Activated CD4-positive, alpha-beta T cell treated with anti-CD3 and anti-CD28 coated beads for 36 hours (primary cell): ENCODE measurements at regions of chr4 and their contacts with region 1.

Region 1: DNA sequence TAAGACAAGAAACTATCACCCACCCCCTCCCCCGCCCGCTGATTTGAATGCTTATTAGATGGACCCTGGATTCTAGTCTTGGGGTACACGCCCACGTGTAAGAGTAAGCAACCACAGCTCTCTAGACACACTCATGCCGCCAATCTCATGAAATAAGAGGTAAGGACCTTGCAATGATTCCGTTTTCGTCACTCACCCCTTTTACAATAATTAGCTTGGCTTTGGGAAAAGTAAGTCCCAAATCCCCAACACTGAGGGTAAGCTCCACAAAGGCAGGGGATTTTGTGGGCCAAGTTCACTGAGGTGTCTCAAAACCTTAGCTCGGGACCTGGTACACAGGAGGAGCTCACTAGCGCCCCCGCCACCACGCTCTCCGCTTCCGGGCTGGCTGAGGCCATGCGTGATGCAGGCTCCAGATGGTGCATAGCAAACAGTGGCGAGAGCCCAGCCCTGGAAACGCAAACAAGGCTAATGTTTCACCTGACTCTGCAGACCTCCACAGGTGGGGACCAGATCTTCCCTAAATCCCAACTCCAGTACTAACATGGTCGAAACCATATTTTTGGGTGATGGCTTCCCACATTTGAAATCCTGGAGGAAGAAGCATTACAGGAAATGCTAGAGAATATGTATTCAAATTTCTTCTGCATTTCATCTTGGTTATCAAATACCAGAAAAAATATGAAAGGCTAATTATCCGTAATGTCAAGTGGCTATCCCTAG is 4.1 kb downstream of the PLAC8 start:
- DNase-seq: peak; percentile 96
- ATAC-seq: peak; percentile 81
- H3K4me3 Mint-ChIP-seq: peak overlapping the region; percentile 91
- H3K27ac Mint-ChIP-seq: peak overlapping the region; percentile 96
- H3K4me1 Mint-ChIP-seq: peaks cover 49% of the 10 kb centered on the region
- H3K27me3 Mint-ChIP-seq: no peaks in the 10 kb centered on the region

Region 2: GRCh38 chr4:82373816-82374625 is 736.4 kb before region 1 on chr4 and contains the start of gene HNRNPD:
- CTCF ChIA-PET with region 1: no interaction called
- POLR2A ChIA-PET with region 1: no interaction called
- intact Hi-C with region 1: loop called in 1 of 2 experiments (anchors 2 kb)
- DNase-seq: peak; percentile 97
- ATAC-seq: peak; percentile 90
- H3K4me3 Mint-ChIP-seq: peak within 1 kb of the TSS; percentile 89
- H3K27ac Mint-ChIP-seq: peak within 1 kb of the TSS; percentile 99
- H3K4me1 Mint-ChIP-seq: peaks cover 34% of the 10 kb centered on the region
- H3K27me3 Mint-ChIP-seq: no peaks in the 10 kb centered on the region
- total RNA-seq, gene HNRNPD: 505 to 510 TPM

Region 3: DNA sequence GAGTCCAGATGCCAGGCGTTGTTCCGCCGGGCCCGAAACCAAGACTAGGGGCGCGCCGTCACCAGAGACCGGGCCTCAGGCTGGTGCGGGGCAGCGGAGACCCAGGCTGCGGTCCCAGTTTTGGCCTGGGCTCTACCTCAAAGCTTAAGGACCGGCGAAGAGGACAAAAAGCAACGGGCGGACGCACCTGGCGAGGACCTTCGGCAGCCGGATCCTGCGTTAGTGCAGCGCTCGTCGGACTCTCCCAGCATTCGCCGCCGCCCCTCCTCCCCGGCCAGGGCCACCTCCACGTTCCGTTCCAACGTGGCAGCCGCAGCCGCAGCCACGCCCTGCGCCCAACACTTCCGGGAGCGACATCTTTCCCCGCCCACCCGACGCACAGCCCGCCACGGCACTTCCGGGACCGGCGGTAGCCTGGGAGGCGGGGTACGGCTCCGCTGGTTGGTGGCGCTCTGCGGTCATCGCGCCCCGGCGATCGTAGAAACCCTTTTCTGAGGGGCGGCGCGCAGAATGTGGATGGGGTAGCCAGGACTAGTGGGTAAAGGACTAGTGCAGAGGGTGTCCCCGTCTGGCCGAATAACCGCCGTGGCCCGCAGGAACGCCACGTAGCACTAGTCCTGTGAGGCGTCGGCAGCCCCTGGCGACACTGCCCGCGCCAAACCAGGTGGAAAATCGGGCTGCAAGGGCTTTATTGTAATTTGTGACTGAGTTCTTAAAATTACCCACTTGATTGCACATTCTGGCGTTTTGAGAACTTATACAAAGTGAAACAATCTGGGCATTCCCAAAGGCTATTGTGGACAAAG is 219.3 kb before region 1 on chr4 and contains the start of gene SEC31A:
- CTCF ChIA-PET with region 1: interaction called, 3 read pairs
- POLR2A ChIA-PET with region 1: no interaction called
- intact Hi-C with region 1: loop called in 1 of 2 experiments (anchors 5 kb)
- DNase-seq: peak; percentile 99
- ATAC-seq: peak; percentile 94
- H3K4me3 Mint-ChIP-seq: peak within 1 kb of the TSS; percentile 81
- H3K27ac Mint-ChIP-seq: peak within 1 kb of the TSS; percentile 89
- H3K4me1 Mint-ChIP-seq: peaks cover 42% of the 10 kb centered on the region
- H3K27me3 Mint-ChIP-seq: no peaks in the 10 kb centered on the region
- total RNA-seq, gene SEC31A: 80.3 to 124 TPM

Region 4: GRCh38 chr4:83034630-83035494 is 75.5 kb before region 1 on chr4 and contains the start of gene COPS4:
- CTCF ChIA-PET with region 1: interaction called, 4 read pairs
- POLR2A ChIA-PET with region 1: interaction called, 4 read pairs
- intact Hi-C with region 1: loop called in 1 of 2 experiments (anchors 1 kb)
- DNase-seq: peak; percentile 97
- ATAC-seq: peak; percentile 97
- H3K4me3 Mint-ChIP-seq: peak within 1 kb of the TSS; percentile 91
- H3K27ac Mint-ChIP-seq: peak within 1 kb of the TSS; percentile 94
- H3K4me1 Mint-ChIP-seq: peaks cover 22% of the 10 kb centered on the region
- H3K27me3 Mint-ChIP-seq: no peaks in the 10 kb centered on the region
- total RNA-seq, gene COPS4: 35.7 to 35.9 TPM

Region 5: GRCh38 chr4:83046693-83047473 is 63.5 kb before region 1 on chr4:
- CTCF ChIA-PET with region 1: no interaction called
- POLR2A ChIA-PET with region 1: no interaction called
- intact Hi-C with region 1: no loop called
- DNase-seq: no peak
- ATAC-seq: no peak
- H3K4me3 Mint-ChIP-seq: no peak overlapping the region
- H3K27ac Mint-ChIP-seq: no peak overlapping the region
- H3K4me1 Mint-ChIP-seq: peaks cover 15% of the 10 kb centered on the region
- H3K27me3 Mint-ChIP-seq: no peaks in the 10 kb centered on the region

Region 6: DNA sequence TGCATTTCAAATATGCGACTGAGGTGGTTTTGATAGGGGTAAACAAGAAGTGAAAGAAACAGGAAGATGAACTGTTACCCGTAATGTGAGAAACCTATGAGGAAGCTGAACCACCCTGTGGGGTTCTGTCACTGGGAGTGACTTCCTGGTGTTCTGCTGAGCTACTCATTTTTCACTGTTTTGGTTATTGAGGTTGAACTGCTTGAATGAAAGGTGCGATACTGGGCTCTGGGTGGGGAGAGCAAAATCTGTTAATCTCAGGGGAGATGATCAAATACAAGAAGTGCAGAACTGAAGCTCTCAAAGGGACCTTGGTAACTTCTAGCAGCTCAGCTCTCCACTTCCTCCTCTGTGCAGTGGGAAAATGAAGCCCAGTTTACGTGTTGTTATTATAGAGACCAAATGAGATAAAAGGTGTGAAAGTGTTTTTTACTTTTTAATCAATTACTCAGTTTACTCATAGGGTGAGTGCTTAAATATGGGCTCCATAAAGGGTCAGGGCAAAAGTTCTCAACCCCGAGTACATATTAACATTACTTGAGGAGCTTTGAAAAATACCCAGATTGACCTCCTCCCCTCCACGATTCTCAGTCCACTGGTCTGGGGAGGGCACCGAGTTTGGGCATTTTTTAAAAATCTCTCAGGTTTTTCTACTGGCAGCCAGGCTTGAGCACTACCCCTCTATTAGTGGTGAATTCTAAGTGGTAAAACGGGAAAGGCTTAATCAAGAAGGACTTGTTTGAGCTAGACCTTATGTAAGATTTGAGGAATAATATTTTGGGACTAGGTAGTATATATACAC is 107.5 kb after region 1 on chr4:
- CTCF ChIA-PET with region 1: interaction called, 9 read pairs
- POLR2A ChIA-PET with region 1: interaction called, 7 read pairs
- intact Hi-C with region 1: loop called (anchors 1 kb)
- DNase-seq: peak; percentile 73
- ATAC-seq: peak; percentile 85
- H3K4me3 Mint-ChIP-seq: peak overlapping the region; percentile 20
- H3K27ac Mint-ChIP-seq: peak overlapping the region; percentile 76
- H3K4me1 Mint-ChIP-seq: peaks cover 79% of the 10 kb centered on the region
- H3K27me3 Mint-ChIP-seq: peaks cover 2% of the 10 kb centered on the region

Region 7: GRCh38 chr4:83252782-83253405 is 142.5 kb after region 1 on chr4:
- CTCF ChIA-PET with region 1: interaction called, 29 read pairs
- POLR2A ChIA-PET with region 1: no interaction called
- intact Hi-C with region 1: loop called in 1 of 2 experiments (anchors 5 kb)
- DNase-seq: peak; percentile 80
- ATAC-seq: peak; percentile 91
- H3K4me3 Mint-ChIP-seq: no peak overlapping the region
- H3K27ac Mint-ChIP-seq: no peak overlapping the region
- H3K4me1 Mint-ChIP-seq: peaks cover 24% of the 10 kb centered on the region
- H3K27me3 Mint-ChIP-seq: no peaks in the 10 kb centered on the region

Region 8: GRCh38 chr4:83455281-83456129 is 345.1 kb after region 1 on chr4 and contains the starts of genes HELQ and MRPS18C:
- CTCF ChIA-PET with region 1: no interaction called
- POLR2A ChIA-PET with region 1: interaction called, 4 read pairs
- intact Hi-C with region 1: loop called (anchors 1 to 10 kb)
- DNase-seq: peak; percentile 97
- ATAC-seq: peak; percentile 92
- H3K4me3 Mint-ChIP-seq: peak within 1 kb of the TSS; percentile 97
- H3K27ac Mint-ChIP-seq: peak within 1 kb of the TSS; percentile 99
- H3K4me1 Mint-ChIP-seq: peaks cover 37% of the 10 kb centered on the region
- H3K27me3 Mint-ChIP-seq: no peaks in the 10 kb centered on the region
- total RNA-seq, gene HELQ: 9.3 to 10.1 TPM
- total RNA-seq, gene MRPS18C: 78.0 to 89.5 TPM